ENCODE measurements at regions of chr4 and their contacts with region 1.

Region 1: DNA sequence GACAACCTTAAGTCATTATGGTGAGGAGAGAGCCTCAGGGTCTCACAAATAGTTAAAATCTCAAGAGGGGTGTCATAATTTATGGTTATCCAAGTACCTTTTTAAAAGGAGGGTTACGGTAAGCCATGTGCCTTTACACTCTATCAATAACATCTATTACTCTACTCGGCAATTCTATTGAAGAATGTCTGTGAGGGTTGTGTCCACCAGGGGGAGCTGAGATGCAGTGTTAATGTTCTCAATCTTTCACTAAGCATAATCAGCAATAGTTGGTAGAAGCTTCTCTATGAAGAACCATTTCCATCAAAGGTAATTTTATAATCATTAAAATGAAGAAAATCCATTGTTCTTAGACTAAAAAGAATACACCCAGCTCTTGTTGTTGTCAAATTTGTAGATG is 457.4 kb downstream of the CENPC start:
- DNase-seq: peak; percentile 10 to 77
- H3K4me3 ChIP-seq: no peak overlapping the region
- H3K27ac ChIP-seq: no peak overlapping the region
- H3K4me1 ChIP-seq: peaks cover 0 to 8% (median 2%) of the 10 kb centered on the region in 4 experiments; a peak in 4 of 7 replicates
- H3K27me3 ChIP-seq: no peaks in the 10 kb centered on the region
- CTCF ChIP-seq: peak in 2 of 3 experiments; percentile 62 to 74; a peak in 3 of 4 replicates
- EP300 ChIP-seq: no peak
- POLR2A ChIP-seq: no peak
- RAD21 ChIP-seq: peak; percentile 80 to 82

Region 2: GRCh38 chr4:67198727-67199126 is 110.8 kb after region 1 on chr4:
- CTCF ChIA-PET with region 1: interaction called, 11 read pairs
- POLR2A ChIA-PET with region 1: no interaction called
- DNase-seq: no peak
- H3K4me3 ChIP-seq: no peak overlapping the region
- H3K27ac ChIP-seq: no peak overlapping the region
- H3K4me1 ChIP-seq: no peaks in the 10 kb centered on the region
- H3K27me3 ChIP-seq: no peaks in the 10 kb centered on the region
- CTCF ChIP-seq: peak in 2 of 3 experiments; percentile 51 to 65; a peak in 3 of 4 replicates
- EP300 ChIP-seq: no peak
- POLR2A ChIP-seq: no peak
- RAD21 ChIP-seq: peak; percentile 67 to 71

Region 3: DNA sequence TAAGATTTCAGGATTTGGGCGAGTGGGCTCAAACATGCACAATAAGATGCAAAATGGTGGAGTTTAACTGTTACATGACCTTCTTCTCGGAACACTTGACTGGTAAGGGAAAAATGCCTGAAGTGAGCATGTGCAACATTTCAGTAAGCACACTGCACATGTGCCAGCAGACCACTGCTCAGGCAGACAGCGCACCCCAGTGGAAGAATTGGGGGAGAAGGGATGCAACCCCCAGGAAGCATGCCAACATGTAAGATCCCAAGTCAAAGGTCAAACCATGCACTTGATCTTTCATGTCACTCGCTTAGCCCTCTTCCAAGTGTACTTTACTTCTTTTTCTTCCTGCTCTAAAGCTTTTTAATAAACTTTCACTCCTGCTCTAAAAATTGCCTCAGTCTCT is 201.1 kb after region 1 on chr4:
- CTCF ChIA-PET with region 1: interaction called, 15 read pairs
- POLR2A ChIA-PET with region 1: no interaction called
- DNase-seq: peak; percentile 46 to 75
- H3K4me3 ChIP-seq: no peak overlapping the region
- H3K27ac ChIP-seq: no peak overlapping the region
- H3K4me1 ChIP-seq: peaks cover 0 to 4% (median 2%) of the 10 kb centered on the region in 4 experiments; a peak in 2 of 7 replicates
- H3K27me3 ChIP-seq: no peaks in the 10 kb centered on the region
- CTCF ChIP-seq: peak; percentile 78 to 91 (median 87)
- EP300 ChIP-seq: no peak
- POLR2A ChIP-seq: no peak
- RAD21 ChIP-seq: peak; percentile 93 to 94

Measured in H1 (cell line).